ENCODE measurements at regions of chr7 and their contacts with region 1.

Region 1: GRCh38 chr7:115356139-115356746 is 434.3 kb downstream of the MDFIC start:
- DNase-seq: no peak
- H3K4me3 Mint-ChIP-seq: no peak overlapping the region
- H3K27ac Mint-ChIP-seq: no peak overlapping the region
- H3K4me1 Mint-ChIP-seq: peaks cover 2% of the 10 kb centered on the region
- H3K27me3 Mint-ChIP-seq: peaks cover 2% of the 10 kb centered on the region

Region 2: DNA sequence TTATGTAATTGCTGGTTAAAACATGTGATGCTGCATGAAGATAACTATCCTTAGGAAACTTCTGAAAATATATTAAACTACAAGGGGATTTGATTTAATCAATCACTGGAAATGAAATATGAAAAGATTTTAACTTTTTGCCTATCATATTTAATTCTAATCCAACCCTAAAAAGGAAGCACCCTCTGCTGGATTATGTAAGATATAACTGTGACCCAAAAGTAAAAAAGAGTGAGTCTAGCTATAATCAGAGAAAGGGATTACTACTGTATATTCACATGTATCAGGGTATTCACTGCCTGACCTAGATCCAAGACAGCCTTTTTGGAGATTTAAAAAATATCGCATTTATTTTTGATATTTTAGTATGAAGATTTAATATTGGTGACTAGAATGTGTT is 138.9 kb before region 1 on chr7:
- CTCF ChIA-PET with region 1: no interaction called
- intact Hi-C with region 1: no loop called
- DNase-seq: no peak
- H3K4me3 Mint-ChIP-seq: no peak overlapping the region
- H3K27ac Mint-ChIP-seq: no peak overlapping the region
- H3K4me1 Mint-ChIP-seq: peaks cover 10% of the 10 kb centered on the region
- H3K27me3 Mint-ChIP-seq: no peaks in the 10 kb centered on the region

Region 3: GRCh38 chr7:115306586-115306985 is 49.7 kb before region 1 on chr7:
- CTCF ChIA-PET with region 1: no interaction called
- intact Hi-C with region 1: no loop called
- DNase-seq: no peak
- H3K4me3 Mint-ChIP-seq: no peak overlapping the region
- H3K27ac Mint-ChIP-seq: no peak overlapping the region
- H3K4me1 Mint-ChIP-seq: no peaks in the 10 kb centered on the region
- H3K27me3 Mint-ChIP-seq: peaks cover 3% of the 10 kb centered on the region

Region 4: DNA sequence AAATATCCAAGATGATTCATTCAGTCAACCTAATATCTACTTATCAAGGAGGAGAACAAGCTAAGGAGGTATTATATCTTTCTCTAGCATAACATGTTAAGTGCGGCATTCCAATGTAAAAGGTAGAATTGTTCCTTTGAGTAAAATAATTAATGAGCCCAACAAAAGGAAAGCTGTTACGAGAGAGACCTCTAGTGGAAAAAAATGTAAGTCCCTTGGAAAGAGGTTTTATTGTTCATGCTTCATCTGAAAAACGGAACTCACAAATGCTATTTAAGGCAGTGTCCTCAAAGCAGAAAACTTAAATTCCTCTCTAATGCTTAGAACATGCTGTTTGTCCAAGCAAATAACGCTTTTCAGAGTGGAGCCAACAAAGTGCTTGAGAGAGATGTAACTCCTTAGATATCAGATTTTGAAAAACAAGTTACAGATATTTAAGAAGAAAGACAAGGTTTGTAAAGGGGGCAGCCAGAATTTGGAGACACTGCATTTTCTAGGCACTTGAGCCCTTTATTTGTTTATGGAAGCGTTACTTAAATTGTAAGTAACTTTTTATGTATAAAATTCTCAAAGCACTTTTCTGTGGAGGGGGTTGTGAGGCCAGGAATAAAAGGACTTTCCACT is 554.4 kb after region 1 on chr7:
- CTCF ChIA-PET with region 1: no interaction called
- intact Hi-C with region 1: loop called (anchors 5 kb)
- DNase-seq: no peak
- H3K4me3 Mint-ChIP-seq: no peak overlapping the region
- H3K27ac Mint-ChIP-seq: no peak overlapping the region
- H3K4me1 Mint-ChIP-seq: no peaks in the 10 kb centered on the region
- H3K27me3 Mint-ChIP-seq: peaks cover 8% of the 10 kb centered on the region

Region 5: DNA sequence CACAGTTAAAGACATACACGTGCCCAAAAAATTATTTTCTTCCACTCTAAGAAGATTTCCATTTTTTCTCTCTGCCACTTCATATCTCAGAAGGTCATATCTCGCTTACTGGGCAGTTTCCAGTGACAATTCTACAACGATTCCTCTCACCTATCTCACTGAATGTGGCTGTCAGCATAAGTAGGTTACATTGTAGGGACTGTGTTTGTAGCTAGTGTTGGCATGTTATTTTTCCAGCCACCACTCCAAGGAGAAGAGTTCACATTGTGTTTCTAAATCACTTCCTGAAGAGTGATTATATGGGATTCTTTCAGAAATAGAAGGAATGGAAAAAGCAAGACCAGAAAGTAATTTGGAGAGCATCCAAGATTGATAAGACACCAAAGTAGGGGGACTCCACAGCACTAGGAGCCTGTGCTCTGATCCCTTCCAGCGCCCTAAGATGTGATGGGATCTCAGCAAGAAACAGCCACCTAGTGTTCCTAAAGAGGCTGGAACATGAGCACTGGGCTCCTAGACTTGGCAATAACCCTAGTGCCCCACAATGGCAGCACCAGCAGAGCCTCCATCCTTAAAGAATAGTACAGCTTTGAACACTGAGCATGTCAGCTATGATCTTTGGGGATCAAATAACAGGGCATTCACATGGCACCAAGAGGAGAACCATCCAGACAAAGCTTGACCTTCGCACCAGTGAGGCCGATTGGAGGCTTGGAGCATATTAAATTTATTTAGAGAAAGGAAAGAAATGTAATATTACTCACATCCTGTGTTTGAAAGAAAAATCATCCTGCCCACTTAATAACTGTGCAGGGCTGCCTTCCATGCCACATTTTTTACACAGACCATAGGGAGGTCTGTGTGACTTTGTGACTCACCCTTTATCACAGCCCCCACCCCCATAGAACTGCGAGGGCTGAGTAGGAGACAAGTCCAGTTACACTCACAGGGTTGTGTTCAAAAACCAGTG is 1220.4 kb after region 1 on chr7:
- CTCF ChIA-PET with region 1: no interaction called
- intact Hi-C with region 1: no loop called
- DNase-seq: no peak
- H3K4me3 Mint-ChIP-seq: no peak overlapping the region
- H3K27ac Mint-ChIP-seq: no peak overlapping the region
- H3K4me1 Mint-ChIP-seq: peaks cover 4% of the 10 kb centered on the region
- H3K27me3 Mint-ChIP-seq: peaks cover 9% of the 10 kb centered on the region